ENCODE measurements at regions of chr1 and their contacts with region 1.

Region 1: DNA sequence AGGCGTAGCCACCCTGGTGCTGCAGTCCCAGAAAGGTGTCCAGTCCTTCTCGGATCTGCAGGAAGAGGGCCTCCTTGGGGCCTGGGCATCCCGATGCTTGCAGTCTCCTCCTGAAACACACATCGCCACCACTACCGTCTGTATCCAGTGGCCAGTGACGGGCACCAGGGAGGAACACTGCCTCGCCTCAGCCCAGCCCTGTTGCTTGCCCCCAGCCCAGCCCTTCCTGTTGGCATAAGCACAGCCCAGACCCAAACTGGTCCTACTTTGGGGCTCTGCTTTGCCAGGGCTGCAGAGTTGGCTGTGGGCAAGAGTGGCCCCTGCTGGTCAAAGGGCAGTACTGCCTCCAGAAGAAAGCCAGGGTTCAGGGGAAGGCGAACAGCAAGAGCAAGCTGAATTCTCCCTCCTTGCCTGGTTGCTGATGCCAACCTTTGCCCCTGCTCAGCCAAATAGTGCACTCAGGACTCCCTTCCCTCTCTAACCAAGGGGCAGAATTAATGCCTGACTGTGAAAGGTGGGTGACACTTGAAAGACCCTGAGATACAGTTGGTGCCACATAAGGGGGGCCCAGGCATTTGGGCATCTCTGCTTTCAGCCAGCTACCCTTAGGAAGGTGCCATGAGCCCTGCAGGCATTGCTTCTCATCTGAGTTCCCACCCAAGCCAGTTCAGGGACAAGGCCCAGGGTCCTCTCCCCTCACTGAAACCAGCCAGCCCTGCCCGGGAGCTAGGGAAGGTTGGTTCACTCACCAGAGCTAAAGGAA is 11.1 kb upstream of the ARHGEF2 start:
- DNase-seq: peak; percentile 83
- ATAC-seq: peak; percentile 100
- H3K4me3 Mint-ChIP-seq: no peak overlapping the region
- H3K27ac Mint-ChIP-seq: no peak overlapping the region
- H3K4me1 Mint-ChIP-seq: peaks cover 10% of the 10 kb centered on the region
- H3K27me3 Mint-ChIP-seq: no peaks in the 10 kb centered on the region
- CTCF ChIP-seq: peak; percentile 97

Region 2: DNA sequence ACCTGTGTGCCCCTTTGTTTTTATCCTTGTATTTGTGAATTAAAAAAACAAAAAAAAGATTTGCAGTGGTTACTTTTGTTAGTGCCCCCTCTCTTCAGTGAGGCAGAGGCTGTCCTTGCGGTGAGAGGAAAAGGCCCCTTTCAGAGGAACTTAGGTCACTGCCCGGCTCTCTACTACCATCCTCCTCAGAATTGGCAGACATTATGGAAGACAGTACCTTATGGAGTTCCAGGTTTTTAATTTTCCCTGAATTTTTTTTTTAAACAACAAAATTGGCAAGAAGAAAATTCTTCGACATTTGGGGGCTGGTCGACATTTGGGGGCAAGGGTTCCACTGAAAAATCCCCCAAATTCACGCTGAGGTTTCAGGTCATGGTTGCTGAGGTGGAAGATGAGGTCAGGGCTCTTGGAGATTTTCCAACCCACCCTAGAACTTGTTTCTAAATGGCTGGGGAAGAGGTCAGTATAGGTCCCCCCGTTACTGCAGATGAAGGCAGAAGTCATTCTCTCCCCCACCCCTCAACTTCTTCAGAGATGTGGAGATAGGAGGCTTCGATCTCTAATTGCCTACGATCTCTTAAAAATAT is 42.7 kb before region 1 on chr1:
- CTCF ChIA-PET with region 1: interaction called, 121 read pairs
- POLR2A ChIA-PET with region 1: interaction called, 5 read pairs
- intact Hi-C with region 1: no loop called
- DNase-seq: no peak
- ATAC-seq: peak; percentile 37
- H3K4me3 Mint-ChIP-seq: peak overlapping the region; percentile 55
- H3K27ac Mint-ChIP-seq: peak overlapping the region; percentile 88
- H3K4me1 Mint-ChIP-seq: peaks cover 52% of the 10 kb centered on the region
- H3K27me3 Mint-ChIP-seq: no peaks in the 10 kb centered on the region
- CTCF ChIP-seq: no peak

Region 3: DNA sequence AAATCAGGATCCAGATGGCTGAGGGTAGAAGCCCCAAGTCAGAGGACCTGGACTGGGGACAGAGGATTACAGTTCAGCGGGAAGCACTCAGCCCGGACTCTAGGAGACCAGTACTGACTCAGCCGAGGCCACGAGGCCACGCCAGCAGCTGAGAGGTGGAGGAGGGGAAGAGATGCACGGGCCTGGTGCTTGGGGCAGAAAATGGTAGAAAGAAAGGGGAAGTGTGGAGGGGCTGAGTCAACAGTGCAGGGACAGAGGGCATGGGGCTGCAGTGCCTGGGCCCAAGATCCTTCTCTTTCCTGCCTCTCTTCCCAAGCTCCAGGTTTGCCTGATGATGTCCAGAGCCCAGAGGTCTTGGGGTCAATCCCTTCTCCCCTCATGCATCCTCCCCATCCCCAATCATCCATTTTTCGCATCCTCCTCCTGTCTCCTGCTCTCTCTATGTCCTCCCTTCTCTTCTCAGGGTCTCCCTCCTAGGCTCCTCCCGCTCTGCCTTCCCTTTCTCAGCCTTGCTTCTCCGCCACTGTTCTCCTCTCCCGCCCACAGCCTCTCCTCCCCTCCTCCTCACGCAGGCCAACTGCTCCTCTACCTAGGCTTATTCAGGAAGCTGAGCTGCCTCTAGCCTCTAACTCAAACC is 18.8 kb before region 1 on chr1:
- CTCF ChIA-PET with region 1: interaction called, 67 read pairs
- POLR2A ChIA-PET with region 1: interaction called, 10 read pairs
- intact Hi-C with region 1: no loop called
- DNase-seq: peak; percentile 62
- ATAC-seq: peak; percentile 72
- H3K4me3 Mint-ChIP-seq: peak overlapping the region; percentile 47
- H3K27ac Mint-ChIP-seq: peak overlapping the region; percentile 88
- H3K4me1 Mint-ChIP-seq: peaks cover 92% of the 10 kb centered on the region
- H3K27me3 Mint-ChIP-seq: no peaks in the 10 kb centered on the region
- CTCF ChIP-seq: no peak

Region 4: GRCh38 chr1:155978325-155978972 is 11.0 kb before region 1 on chr1 and contains the start of gene ARHGEF2:
- CTCF ChIA-PET with region 1: interaction called, 67 read pairs
- POLR2A ChIA-PET with region 1: interaction called, 5 read pairs
- intact Hi-C with region 1: no loop called
- DNase-seq: peak; percentile 93
- ATAC-seq: peak; percentile 68
- H3K4me3 Mint-ChIP-seq: peak within 1 kb of the TSS; percentile 98
- H3K27ac Mint-ChIP-seq: peak within 1 kb of the TSS; percentile 94
- H3K4me1 Mint-ChIP-seq: peaks cover 67% of the 10 kb centered on the region
- H3K27me3 Mint-ChIP-seq: no peaks in the 10 kb centered on the region
- CTCF ChIP-seq: peak; percentile 19
- total RNA-seq, gene ARHGEF2: 147 to 150 TPM

Region 5: GRCh38 chr1:156001682-156002171 is 12.3 kb after region 1 on chr1:
- CTCF ChIA-PET with region 1: interaction called, 11 read pairs
- POLR2A ChIA-PET with region 1: interaction called, 3 read pairs
- intact Hi-C with region 1: no loop called
- DNase-seq: no peak
- ATAC-seq: no peak
- H3K4me3 Mint-ChIP-seq: no peak overlapping the region
- H3K27ac Mint-ChIP-seq: no peak overlapping the region
- H3K4me1 Mint-ChIP-seq: peaks cover 16% of the 10 kb centered on the region
- H3K27me3 Mint-ChIP-seq: no peaks in the 10 kb centered on the region
- CTCF ChIP-seq: no peak